ENCODE measurements at regions of chr6 and their contacts with region 1.

Region 1: DNA sequence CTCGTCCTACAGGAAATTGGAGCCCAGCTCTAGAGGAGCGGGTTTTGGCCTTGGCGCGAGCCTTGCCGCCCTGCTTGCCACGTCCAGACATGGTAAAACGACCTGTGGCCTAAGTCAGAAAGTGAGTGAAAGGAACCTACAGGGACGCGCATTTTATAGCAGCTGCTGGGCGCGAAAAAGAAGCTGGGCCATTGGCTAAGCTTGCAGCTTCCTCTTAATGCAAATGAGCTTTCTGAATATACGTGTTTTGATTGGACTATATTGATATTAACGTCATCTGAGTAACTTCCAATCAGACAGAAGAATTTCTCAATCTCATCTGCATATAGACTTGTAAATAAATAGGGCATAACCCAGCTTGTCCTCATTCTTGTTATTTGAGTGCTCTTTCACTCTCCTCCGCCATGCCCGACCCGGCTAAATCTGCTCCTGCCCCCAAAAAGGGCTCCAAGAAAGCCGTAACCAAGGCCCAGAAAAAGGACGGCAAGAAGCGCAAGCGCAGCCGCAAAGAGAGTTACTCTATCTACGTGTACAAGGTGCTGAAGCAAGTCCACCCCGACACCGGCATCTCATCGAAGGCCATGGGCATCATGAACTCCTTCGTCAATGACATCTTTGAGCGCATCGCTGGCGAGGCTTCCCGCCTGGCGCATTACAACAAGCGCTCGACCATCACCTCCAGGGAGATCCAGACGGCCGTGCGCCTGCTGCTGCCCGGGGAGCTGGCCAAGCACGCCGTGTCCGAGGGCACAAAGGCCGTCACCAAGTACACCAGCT is 18.9 kb downstream of the OR2B2 start:
- DNase-seq: peak; percentile 97
- H3K4me3 ChIP-seq: peak overlapping the region; percentile 63
- H3K27ac ChIP-seq: peak overlapping the region; percentile 94
- H3K4me1 ChIP-seq: peaks cover 22% of the 10 kb centered on the region
- H3K27me3 ChIP-seq: no peaks in the 10 kb centered on the region
- CTCF ChIP-seq: no peak

Region 2: GRCh38 chr6:26196846-26197648 is 1696.2 kb before region 1 on chr6:
- CTCF ChIA-PET with region 1: no interaction called
- POLR2A ChIA-PET with region 1: interaction called, 11 read pairs
- intact Hi-C with region 1: no loop called
- DNase-seq: peak; percentile 96
- H3K4me3 ChIP-seq: peak overlapping the region; percentile 63
- H3K27ac ChIP-seq: peak overlapping the region; percentile 87
- H3K4me1 ChIP-seq: no peaks in the 10 kb centered on the region
- H3K27me3 ChIP-seq: no peaks in the 10 kb centered on the region
- CTCF ChIP-seq: no peak

Region 3: GRCh38 chr6:27132532-27133280 is 760.5 kb before region 1 on chr6:
- CTCF ChIA-PET with region 1: no interaction called
- POLR2A ChIA-PET with region 1: interaction called, 30 read pairs
- intact Hi-C with region 1: loop called (anchors 2 kb)
- DNase-seq: peak; percentile 99
- H3K4me3 ChIP-seq: peak overlapping the region; percentile 59
- H3K27ac ChIP-seq: peak overlapping the region; percentile 96
- H3K4me1 ChIP-seq: peaks cover 32% of the 10 kb centered on the region
- H3K27me3 ChIP-seq: no peaks in the 10 kb centered on the region
- CTCF ChIP-seq: no peak

Region 4: DNA sequence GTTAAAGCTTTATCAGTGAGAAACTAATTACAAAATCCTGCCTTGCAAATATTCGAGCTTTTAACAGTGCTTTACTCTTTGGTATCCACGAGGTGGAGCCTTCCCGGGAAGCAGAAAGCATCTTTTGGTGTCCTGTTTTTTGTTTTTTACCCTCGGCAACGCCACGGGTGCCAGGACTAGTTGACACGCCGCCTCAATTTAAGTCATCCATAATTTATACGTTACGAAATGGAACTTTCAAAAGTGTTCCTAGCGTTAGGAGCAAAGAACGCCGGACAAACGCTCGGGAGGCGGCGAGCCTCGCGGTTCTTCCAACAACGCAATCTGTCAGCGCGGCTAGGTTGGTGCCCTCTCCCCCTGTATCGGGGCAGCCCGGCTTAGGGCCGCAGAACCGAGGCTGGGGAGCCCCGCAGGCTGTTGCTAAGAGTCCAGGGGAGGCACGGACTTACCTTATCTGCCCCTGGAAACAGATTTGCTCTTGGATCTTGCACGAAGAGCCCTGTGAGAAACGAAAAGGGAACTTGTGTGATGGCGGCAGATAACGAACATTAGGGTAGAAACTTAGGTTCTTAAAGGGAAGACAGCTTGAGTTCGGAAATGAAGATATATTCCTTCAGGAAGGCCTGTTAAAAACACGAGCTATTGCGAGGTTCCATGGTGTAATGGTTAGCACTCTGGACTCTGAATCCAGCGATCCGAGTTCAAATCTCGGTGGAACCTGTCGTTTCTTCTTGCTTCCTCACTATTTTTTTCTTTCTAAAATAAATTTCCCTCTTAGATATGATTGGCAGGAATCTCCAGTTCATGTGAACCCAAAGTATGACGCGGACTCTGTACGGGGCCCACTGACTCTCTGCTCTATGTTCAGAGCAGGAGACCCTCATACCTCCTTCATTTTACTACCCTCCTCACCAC is 374.1 kb before region 1 on chr6:
- CTCF ChIA-PET with region 1: no interaction called
- POLR2A ChIA-PET with region 1: no interaction called
- intact Hi-C with region 1: loop called (anchors 2 kb)
- DNase-seq: peak; percentile 92
- H3K4me3 ChIP-seq: peak overlapping the region; percentile 70
- H3K27ac ChIP-seq: peak overlapping the region; percentile 77
- H3K4me1 ChIP-seq: peaks cover 7% of the 10 kb centered on the region
- H3K27me3 ChIP-seq: peaks cover 10% of the 10 kb centered on the region
- CTCF ChIP-seq: peak; percentile 75

Region 5: GRCh38 chr6:27864906-27865849 is 28.1 kb before region 1 on chr6:
- CTCF ChIA-PET with region 1: no interaction called
- POLR2A ChIA-PET with region 1: interaction called, 78 read pairs
- intact Hi-C with region 1: no loop called
- DNase-seq: peak; percentile 97
- H3K4me3 ChIP-seq: peak overlapping the region; percentile 68
- H3K27ac ChIP-seq: peak overlapping the region; percentile 93
- H3K4me1 ChIP-seq: peaks cover 7% of the 10 kb centered on the region
- H3K27me3 ChIP-seq: no peaks in the 10 kb centered on the region
- CTCF ChIP-seq: no peak

Region 6: DNA sequence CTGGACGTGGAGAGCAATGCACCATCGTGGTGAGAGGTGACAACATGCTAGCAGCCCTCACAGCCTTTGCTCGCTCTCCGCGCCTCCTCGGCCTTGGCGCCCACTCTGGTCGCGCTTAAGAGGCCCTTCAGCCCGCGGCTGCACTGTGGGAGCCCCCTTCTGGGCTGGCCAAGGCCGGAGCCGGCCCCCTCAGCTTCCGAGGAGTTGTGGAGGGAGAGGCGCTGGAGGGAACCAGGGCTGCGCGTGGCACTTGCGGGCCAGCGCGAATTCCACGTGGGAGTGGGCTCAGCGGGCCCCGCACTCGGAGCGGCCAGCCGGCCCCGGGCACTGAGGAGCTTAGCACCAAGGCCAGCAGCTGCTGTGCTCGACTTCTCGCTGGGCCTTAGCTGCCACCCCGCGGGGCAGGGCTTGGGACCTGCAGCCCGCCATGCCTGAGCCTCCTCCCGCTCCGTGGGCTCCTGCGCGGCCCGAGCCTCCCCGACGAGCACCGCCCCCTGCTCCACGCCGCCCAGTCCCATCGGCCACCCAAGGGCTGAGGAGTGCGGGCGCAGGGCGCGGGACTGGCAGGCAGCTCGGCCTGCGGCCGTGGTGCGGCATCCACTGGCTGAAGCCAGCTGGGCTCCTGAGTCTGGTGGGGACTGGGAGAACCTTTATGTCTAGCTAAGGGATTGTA is 618.5 kb after region 1 on chr6:
- CTCF ChIA-PET with region 1: no interaction called
- POLR2A ChIA-PET with region 1: interaction called, 13 read pairs
- intact Hi-C with region 1: no loop called
- DNase-seq: no peak
- H3K4me3 ChIP-seq: no peak overlapping the region
- H3K27ac ChIP-seq: no peak overlapping the region
- H3K4me1 ChIP-seq: no peaks in the 10 kb centered on the region
- H3K27me3 ChIP-seq: peaks cover 7% of the 10 kb centered on the region
- CTCF ChIP-seq: no peak

Measured in A673 (cell line).